Left cardiac atrium (tissue), 4 donors: ENCODE measurements at regions of chr16 and their contacts with region 1.

Region 1: GRCh38 chr16:1054660-1055556 is 17.6 kb upstream of the SSTR5 start:
- DNase-seq: peak; percentile 73
- ATAC-seq: peak; percentile 75 to 81

Region 2: DNA sequence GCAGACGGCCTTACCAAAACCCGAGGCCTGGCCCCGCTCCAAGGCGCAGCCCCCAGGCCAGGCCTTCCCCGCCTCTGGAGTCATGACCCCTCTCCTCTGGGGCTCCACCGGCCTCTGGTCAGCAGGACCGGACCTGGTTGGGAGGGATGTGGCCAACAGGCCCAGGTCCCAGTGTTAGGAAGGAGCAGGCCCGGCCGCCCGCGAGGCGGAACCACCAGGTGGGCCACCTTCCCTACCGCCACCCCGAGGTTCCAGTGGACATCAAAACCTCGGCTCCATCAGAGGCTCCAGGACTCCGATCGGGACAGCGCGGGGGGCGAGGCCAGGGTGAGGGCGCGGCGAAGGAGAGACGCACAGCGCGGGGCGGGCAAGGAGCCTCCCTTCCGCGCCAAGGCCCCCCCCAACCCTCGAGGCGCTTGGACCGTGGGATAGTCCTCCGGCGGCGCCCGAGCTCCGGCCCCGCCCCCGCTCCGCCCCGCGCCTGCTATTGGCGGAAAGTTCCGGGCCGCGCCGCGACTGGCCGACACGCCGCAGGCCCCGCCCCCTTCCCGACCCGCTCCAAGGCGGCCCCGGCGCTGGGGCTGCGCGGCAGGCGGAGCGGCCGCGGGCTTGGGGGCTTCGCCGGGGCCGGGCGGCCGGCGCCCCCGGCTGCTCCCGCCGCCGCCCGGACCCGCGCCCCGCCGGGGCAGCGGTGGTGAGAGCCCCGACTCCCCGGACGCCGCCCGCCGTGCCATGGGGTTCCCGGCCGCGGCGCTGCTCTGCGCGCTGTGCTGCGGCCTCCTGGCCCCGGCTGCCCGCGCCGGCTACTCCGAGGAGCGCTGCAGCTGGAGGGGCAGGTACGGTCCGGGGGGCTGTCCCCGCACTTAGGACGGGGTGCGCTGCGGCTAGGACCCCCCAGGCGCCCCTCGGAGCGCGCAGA is 340.1 kb before region 1 on chr16 and contains the start of gene METRN:
- intact Hi-C with region 1: loop called in 1 of 2 experiments (anchors 10 kb)
- DNase-seq: peak; percentile 95
- ATAC-seq: peak; percentile 85 to 95
- total RNA-seq, gene METRN: 53.7 to 56.8 TPM

Region 3: DNA sequence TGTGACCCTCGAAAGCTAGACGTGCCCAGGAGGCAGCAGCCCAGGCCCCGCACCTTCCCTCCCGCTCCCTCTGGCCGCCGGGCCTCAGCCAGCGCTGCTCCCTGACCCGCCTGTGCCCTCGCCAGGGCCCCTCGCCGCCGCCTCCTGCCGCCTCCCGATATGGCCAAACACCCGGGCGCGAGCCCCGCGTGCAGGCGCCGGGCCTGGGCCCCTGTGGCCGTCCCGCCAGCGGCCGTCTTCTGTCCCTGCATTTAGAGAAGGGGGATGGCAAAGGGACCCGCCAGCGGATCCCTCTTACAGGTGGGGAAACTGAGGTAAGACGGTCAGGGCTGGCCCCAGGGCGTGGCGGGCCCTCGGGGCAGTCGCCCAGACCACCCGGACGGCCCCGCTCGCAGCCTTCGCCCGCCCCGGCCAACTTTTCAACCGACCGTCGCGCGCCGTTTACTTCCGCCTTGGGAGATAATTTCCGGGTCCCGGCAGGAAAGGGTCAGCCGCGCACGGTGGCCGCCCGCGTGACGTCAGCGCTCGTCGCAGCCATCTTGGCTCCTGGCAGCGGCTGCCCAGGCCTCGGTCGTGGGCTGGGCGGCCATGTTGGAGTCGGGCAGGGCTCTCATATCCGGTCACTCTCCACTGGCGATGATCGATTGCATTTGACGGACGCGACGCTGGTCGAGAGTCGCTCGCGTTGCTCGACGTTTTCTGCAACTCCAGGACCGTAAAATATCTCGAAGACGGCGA is 247.4 kb before region 1 on chr16:
- intact Hi-C with region 1: loop called in 1 of 2 experiments (anchors 5 kb)
- DNase-seq: peak; percentile 95
- ATAC-seq: peak; percentile 99

Region 4: GRCh38 chr16:814974-815373 is 239.9 kb before region 1 on chr16:
- intact Hi-C with region 1: loop called (anchors 2 to 5 kb)
- DNase-seq: no peak
- ATAC-seq: no peak

Region 5: DNA sequence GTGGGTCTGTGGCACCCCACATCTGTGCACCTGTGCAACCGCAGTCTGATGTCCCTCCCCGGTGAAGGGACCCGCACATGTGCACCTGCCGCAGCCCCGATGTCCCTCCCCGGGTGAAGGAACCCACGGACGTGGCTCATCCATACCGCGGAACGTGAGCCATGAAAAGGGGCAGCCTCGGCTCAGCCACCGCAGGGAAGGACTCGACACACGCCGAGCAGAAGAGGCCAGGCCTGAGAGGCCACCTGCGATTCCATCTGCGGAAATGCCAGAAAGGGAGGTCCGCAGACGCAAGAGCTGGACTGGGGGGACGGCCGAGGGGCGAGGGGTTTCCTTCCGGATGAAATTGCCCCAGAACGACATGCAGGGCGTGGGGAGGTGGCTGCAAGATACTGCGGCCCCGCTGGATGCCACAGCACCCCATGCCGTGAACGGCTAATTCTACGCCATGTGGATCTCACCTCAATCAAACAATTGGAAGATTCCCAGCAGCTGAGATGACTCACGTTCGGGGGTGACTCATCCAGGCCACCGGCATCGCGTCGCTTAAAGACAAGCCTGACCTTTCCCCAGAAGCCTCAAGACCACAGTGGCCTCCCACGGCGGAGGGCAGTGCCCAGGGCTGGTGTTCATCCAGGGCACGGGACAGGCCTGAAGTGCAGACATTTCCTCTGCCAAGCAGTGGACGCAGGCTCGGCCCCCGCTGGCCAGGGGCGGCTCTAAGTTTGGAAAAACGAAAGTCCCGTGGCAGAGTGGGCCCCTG is 52.3 kb before region 1 on chr16:
- intact Hi-C with region 1: no loop called
- DNase-seq: no peak
- ATAC-seq: peak in 1 of 2 donors; percentile 28

Region 6: GRCh38 chr16:1105888-1106620 is 51.1 kb after region 1 on chr16:
- intact Hi-C with region 1: loop called in 1 of 2 experiments (anchors 2 kb)
- DNase-seq: peak; percentile 68
- ATAC-seq: peak; percentile 75 to 82

Region 7: DNA sequence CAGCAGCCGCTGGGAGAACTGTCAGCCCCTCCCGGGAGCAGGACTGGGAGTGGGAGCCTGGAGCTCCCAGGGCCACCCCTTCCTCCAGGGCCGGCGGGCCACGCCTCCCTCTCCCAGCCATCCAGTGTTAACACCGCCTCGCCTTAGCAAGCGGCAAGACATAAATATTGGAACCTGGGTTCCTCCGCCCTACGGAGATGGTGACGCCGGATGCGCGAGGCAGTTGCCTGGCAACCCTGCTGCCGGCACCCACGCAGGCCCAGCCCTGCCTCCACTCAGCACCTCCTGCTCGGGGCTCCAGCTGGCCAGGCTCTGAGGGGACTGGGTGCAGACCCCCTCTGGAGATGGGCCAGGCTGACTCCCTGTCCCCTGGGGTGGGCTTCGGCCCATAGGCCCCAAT is 70.6 kb after region 1 on chr16:
- intact Hi-C with region 1: no loop called
- DNase-seq: no peak
- ATAC-seq: no peak

Region 8: DNA sequence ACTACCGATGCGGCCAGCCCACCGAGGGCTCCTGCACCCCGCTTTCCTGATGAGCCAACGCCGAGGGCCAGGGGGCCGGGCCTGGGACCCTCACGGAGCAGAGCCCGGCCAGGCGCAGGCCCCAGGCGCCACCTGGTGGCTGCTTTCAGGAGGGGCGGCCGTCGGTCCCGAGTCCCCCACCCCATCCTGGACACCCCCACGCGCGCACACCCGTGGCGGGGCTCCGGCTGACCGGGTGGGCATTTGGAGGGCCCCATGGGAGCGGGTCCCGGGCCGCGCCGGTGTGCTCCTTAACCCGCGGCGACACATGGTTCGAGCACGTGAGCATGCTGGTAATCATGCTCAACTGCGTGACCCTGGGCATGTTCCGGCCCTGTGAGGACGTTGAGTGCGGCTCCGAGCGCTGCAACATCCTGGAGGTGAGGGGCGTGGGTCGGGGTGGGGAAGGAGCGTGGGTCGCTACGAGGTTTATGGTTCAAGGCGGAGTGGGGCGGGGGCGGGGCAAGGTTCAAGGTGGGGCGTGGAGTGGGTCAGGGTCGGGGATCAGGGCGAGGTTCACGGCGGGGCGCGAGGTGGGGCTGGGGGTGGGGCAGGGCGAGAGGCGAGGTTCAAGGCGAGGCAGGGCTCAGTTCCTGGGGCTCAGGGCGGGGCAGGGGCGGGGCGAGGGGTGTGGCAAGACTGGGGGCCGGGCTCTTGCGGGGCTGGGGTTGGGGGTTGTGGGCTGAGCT is 139.9 kb after region 1 on chr16:
- intact Hi-C with region 1: loop called in 1 of 2 experiments (anchors 5 kb)
- DNase-seq: no peak
- ATAC-seq: peak; percentile 36 to 39

Region 9: GRCh38 chr16:1351582-1352362 is 296.9 kb after region 1 on chr16 and contains the starts of genes GNPTG and TSR3:
- intact Hi-C with region 1: no loop called
- DNase-seq: peak; percentile 90
- ATAC-seq: peak; percentile 86 to 93
- total RNA-seq, gene GNPTG: 44.1 to 44.3 TPM
- total RNA-seq, gene TSR3: 44.5 to 59.1 TPM